Posterior vena cava (tissue), 2 donors: ENCODE measurements at regions of chr11 and their contacts with region 1.

Region 1: GRCh38 chr11:118462178-118462577 is 25.9 kb downstream of the KMT2A start:
- DNase-seq: no peak

Region 2: DNA sequence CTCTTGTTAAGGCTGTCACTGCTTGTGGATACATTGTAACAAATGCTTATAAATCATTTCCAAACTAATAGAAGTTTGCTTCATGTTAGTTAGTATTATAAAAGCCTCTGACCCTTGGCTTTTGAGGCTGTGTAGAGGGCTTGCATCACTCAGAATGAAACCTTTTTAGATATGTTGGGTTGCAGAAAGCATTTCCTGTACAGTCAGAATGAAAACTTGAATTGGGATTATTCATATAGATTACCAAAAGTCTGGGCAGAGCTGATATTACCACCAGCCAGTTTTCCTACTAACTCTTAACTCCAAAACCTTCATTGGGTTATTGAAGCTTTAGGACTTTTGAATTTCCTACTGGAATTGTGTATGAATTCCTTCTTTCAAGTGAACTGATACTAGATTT is 13.9 kb before region 1 on chr11:
- intact Hi-C with region 1: loop called in 1 of 2 experiments (anchors 2 kb)
- DNase-seq: no peak